Endothelial cell of umbilical vein (primary cell): ENCODE measurements at regions of chr13 and their contacts with region 1.

Region 1: DNA sequence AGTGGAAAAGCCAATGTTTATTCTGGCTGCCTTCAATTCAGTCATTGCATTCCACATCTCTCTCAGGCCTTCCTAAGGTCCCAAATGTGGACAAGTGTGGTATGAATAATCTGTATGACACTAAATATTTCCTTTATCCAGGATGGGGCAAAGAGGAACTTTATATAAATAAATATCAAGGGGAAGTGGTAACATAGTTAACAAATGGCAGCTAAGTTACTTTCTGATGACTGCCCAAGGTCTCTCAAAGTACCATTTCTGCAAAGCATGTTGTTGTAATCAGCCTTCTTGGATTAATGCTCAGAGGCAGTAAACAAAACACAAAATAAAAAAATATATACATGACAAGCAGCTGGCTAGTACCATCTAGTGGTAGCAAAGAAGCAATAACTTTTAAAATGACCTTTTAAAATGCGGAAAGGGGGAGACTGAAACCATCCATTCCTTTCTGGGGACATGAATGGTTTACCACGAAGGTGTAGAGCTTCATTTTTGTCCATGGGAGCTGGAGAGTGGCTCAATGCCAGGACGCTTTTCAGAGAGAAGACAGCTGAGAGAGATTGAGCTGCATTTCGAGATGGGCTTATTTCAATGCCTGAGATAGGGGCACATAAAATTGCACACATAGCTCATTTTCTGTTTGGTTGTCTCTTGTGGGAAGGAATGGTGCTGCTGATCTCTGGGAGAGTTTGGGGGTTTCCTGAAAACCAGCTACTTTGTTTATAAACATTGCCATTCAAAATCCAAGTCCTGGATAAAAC is 259.2 kb downstream of the RFC3 start:
- DNase-seq: peak; percentile 48
- H3K4me3 ChIP-seq: no peak overlapping the region
- H3K27ac ChIP-seq: no peak overlapping the region
- H3K4me1 ChIP-seq: peaks cover 14% of the 10 kb centered on the region
- H3K27me3 ChIP-seq: no peaks in the 10 kb centered on the region
- CTCF ChIP-seq: peak; percentile 40 to 41
- POLR2A ChIP-seq: no peak

Region 2: GRCh38 chr13:33799950-33800592 is 277.1 kb before region 1 on chr13:
- CTCF ChIA-PET with region 1: interaction called, 61 read pairs
- POLR2A ChIA-PET with region 1: no interaction called
- dilution Hi-C with region 1: no loop called
- intact Hi-C with region 1: loop called (anchors 1 kb)
- DNase-seq: peak; percentile 67
- H3K4me3 ChIP-seq: no peak overlapping the region
- H3K27ac ChIP-seq: no peak overlapping the region
- H3K4me1 ChIP-seq: no peaks in the 10 kb centered on the region
- H3K27me3 ChIP-seq: peaks cover 0 to 7% of the 10 kb centered on the region in 2 experiments
- CTCF ChIP-seq: peak; percentile 24 to 37
- POLR2A ChIP-seq: no peak

Region 3: DNA sequence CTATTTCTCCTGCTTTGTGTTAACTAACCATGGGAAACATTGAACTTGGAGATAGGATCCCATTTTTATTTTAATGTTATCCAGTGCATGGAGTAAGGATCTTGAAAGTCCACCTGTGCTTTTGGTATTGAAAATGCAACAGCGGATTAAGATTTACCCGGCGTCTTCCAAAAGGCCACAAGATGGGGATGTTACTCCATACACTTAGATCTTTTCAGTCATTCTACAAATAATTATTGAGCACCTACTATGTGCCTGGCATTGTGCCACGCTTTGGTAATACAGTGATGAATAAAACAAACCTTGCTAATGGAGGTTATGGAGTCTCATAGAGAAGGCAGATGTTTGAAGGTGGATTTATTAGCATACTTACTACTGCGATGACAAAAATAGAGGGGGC is 202.2 kb before region 1 on chr13:
- CTCF ChIA-PET with region 1: interaction called, 6 read pairs
- POLR2A ChIA-PET with region 1: no interaction called
- dilution Hi-C with region 1: no loop called
- intact Hi-C with region 1: loop called (anchors 5 kb)
- DNase-seq: peak; percentile 17
- H3K4me3 ChIP-seq: no peak overlapping the region
- H3K27ac ChIP-seq: no peak overlapping the region
- H3K4me1 ChIP-seq: peaks cover 17% of the 10 kb centered on the region
- H3K27me3 ChIP-seq: no peaks in the 10 kb centered on the region
- CTCF ChIP-seq: peak in 1 of 2 donors; percentile 9
- POLR2A ChIP-seq: no peak

Region 4: DNA sequence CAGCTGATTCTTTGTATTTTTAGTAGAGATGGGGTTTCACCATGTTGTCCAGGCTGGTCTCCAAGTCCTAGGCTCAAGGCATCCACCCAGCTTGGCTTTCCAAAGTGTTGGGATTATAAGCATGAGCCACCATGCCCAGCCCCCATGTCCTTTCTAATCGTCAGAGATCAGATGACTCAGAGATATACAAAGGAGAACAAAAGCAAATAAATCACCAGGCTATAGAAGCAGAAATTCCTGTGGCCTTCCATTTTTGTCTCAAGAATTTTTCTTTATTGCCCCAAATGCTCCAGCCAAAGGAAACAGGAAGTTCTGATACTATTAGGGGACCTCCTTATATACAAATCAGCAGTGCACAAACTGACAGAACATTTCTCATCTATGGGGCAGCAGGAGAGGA is 51.4 kb before region 1 on chr13:
- CTCF ChIA-PET with region 1: no interaction called
- POLR2A ChIA-PET with region 1: no interaction called
- dilution Hi-C with region 1: no loop called
- intact Hi-C with region 1: loop called (anchors 5 kb)
- DNase-seq: peak; percentile 57
- H3K4me3 ChIP-seq: no peak overlapping the region
- H3K27ac ChIP-seq: peak overlapping the region; percentile 71
- H3K4me1 ChIP-seq: peaks cover 13% of the 10 kb centered on the region
- H3K27me3 ChIP-seq: no peaks in the 10 kb centered on the region
- CTCF ChIP-seq: no peak
- POLR2A ChIP-seq: no peak

Region 5: DNA sequence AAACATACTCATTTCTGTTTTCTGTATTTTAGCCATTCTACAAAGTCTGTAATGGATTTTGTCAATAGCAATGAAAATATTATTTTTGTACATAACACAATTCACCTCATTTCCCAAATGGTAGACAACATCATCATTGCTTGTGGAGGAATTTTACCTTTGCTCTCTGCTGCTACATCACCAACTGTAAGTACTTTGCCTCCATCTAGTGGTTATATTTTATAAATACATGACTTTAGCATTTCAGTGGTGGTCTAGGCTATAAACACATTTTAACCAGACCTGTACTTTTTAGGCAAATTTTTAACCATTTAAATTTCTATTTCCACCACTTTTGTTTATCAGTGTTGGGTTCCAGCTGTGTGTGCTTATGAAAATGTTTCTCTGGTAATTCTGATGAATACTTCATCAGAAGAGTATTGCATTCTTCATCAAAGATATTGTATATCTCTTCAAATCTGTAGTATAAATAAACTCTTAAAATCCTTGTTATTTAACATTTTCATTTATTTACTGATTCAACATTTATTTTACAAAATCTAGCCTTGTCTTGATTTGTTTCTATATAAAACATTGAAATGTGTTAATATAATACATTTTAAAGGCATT is 1087.3 kb after region 1 on chr13:
- CTCF ChIA-PET with region 1: interaction called, 7 read pairs
- POLR2A ChIA-PET with region 1: no interaction called
- dilution Hi-C with region 1: no loop called
- intact Hi-C with region 1: loop called (anchors 2 kb)
- DNase-seq: peak; percentile 59
- H3K4me3 ChIP-seq: no peak overlapping the region
- H3K27ac ChIP-seq: no peak overlapping the region
- H3K4me1 ChIP-seq: no peaks in the 10 kb centered on the region
- H3K27me3 ChIP-seq: no peaks in the 10 kb centered on the region
- CTCF ChIP-seq: peak; percentile 25 to 26
- POLR2A ChIP-seq: no peak